ENCODE measurements at regions of chr22 and their contacts with region 1.

Region 1: GRCh38 chr22:31749636-31750364 is at the start of gene PRR14L:
- DNase-seq: peak; percentile 100
- ATAC-seq: peak; percentile 71
- H3K4me3 Mint-ChIP-seq: peak within 1 kb of the TSS; percentile 89
- H3K27ac Mint-ChIP-seq: peak within 1 kb of the TSS; percentile 93
- H3K4me1 Mint-ChIP-seq: peaks cover 43% of the 10 kb centered on the region
- H3K27me3 Mint-ChIP-seq: no peaks in the 10 kb centered on the region
- total RNA-seq, gene PRR14L: 48.2 to 52.2 TPM

Region 2: DNA sequence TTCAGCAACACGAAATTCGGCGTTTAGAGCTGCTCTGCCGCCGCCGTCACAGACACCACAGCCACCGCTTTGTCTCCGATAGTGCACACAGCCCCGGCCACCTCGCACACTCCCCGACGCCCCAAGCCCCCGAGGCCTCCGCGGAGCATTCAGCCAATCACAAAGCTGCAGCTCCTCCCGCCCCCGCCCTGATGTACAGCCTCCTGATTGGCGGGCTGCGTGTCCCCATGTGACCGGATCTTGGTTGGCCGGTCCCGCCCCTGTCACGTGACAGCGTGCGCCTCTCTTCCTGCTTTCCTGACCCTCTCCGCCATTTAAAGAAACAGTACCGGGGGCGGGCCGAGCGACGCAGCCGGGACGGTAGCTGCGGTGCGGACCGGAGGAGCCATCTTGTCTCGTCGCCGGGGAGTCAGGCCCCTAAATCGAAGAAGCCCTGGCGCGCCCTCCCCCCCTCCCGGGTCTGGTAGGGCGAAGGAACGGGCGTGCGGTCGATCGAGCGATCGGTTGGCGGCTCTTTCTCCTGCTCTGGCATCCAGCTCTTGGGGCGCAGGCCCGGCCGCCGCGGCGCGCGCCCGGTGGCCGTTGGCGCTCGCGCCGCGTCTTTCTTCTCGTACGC is 780.8 kb before region 1 on chr22 and contains the start of gene TUG1:
- CTCF ChIA-PET with region 1: no interaction called
- POLR2A ChIA-PET with region 1: no interaction called
- intact Hi-C with region 1: loop called in 1 of 2 experiments (anchors 1 kb)
- DNase-seq: peak; percentile 99
- ATAC-seq: peak; percentile 93
- H3K4me3 Mint-ChIP-seq: peak within 1 kb of the TSS; percentile 90
- H3K27ac Mint-ChIP-seq: peak within 1 kb of the TSS; percentile 95
- H3K4me1 Mint-ChIP-seq: peaks cover 51% of the 10 kb centered on the region
- H3K27me3 Mint-ChIP-seq: no peaks in the 10 kb centered on the region
- total RNA-seq, gene TUG1: 46.8 to 56.4 TPM

Region 3: DNA sequence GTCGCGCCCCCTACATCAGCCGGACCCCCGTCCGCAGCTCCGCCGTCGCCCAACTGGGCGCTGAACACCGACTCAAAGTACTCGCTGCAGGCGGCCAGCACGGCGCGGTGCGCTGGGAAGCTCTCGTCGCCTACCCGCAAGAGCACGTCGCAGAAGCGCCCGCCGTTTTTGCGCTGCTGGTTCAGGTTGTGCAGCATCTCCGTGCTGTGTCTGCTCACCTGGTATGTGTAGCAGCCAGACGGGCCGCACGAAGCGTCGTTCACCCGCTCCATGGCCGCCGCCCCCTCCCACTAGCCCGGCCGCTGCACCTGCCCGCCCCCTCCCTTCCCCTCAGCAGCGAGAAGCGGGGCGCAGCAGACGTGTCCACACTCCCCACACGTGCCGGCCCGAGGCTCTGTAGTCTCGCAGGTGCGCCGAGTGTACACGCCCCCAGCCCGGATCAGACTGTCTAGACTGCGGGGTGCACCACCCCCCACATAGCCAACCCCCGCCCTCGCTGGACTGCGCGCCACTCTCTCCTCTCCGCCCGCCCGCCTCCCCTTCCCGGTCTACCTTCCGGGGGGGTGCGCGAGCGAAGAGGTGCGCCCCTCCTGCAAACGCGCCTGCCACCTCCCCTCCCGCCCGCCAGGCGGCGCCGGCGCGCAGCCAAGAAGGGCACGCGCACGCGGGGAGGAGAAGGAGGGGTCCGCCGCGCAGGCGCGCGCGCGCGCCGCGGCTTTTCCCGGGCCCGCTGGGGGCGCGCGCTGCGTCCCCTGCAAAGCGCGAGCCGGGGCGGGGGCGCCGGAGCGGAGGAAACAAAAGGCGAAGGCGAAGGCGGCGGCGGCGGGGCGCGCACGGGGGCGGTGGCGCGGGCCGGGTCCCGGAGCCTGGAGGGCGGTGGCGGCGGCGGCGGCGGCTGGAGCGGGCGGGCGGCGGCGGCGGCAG is 404.2 kb before region 1 on chr22:
- CTCF ChIA-PET with region 1: no interaction called
- POLR2A ChIA-PET with region 1: no interaction called
- intact Hi-C with region 1: loop called (anchors 1 to 5 kb)
- DNase-seq: peak; percentile 93
- ATAC-seq: peak; percentile 59
- H3K4me3 Mint-ChIP-seq: peak overlapping the region; percentile 90
- H3K27ac Mint-ChIP-seq: peak overlapping the region; percentile 92
- H3K4me1 Mint-ChIP-seq: peaks cover 44% of the 10 kb centered on the region
- H3K27me3 Mint-ChIP-seq: no peaks in the 10 kb centered on the region

Region 4: GRCh38 chr22:31496007-31496734 is 253.6 kb before region 1 on chr22 and contains the start of gene SFI1:
- CTCF ChIA-PET with region 1: no interaction called
- POLR2A ChIA-PET with region 1: no interaction called
- intact Hi-C with region 1: loop called in 1 of 2 experiments (anchors 1 kb)
- DNase-seq: peak; percentile 97
- ATAC-seq: peak; percentile 87
- H3K4me3 Mint-ChIP-seq: peak within 1 kb of the TSS; percentile 85
- H3K27ac Mint-ChIP-seq: peak within 1 kb of the TSS; percentile 93
- H3K4me1 Mint-ChIP-seq: peaks cover 55% of the 10 kb centered on the region
- H3K27me3 Mint-ChIP-seq: no peaks in the 10 kb centered on the region
- total RNA-seq, gene SFI1: 221 to 234 TPM

Region 5: GRCh38 chr22:31676700-31677099 is 73.1 kb before region 1 on chr22:
- CTCF ChIA-PET with region 1: no interaction called
- POLR2A ChIA-PET with region 1: no interaction called
- intact Hi-C with region 1: loop called in 1 of 2 experiments (anchors 1 kb)
- DNase-seq: peak; percentile 95
- ATAC-seq: peak; percentile 100
- H3K4me3 Mint-ChIP-seq: peak overlapping the region; percentile 76
- H3K27ac Mint-ChIP-seq: peak overlapping the region; percentile 89
- H3K4me1 Mint-ChIP-seq: peaks cover 13% of the 10 kb centered on the region
- H3K27me3 Mint-ChIP-seq: no peaks in the 10 kb centered on the region

Region 6: GRCh38 chr22:31970490-31971444 is 221.0 kb after region 1 on chr22:
- CTCF ChIA-PET with region 1: interaction called, 5 read pairs
- POLR2A ChIA-PET with region 1: no interaction called
- intact Hi-C with region 1: loop called in 1 of 2 experiments (anchors 1 kb)
- DNase-seq: peak; percentile 93
- ATAC-seq: peak; percentile 95
- H3K4me3 Mint-ChIP-seq: peak overlapping the region; percentile 57
- H3K27ac Mint-ChIP-seq: peak overlapping the region; percentile 37
- H3K4me1 Mint-ChIP-seq: peaks cover 11% of the 10 kb centered on the region
- H3K27me3 Mint-ChIP-seq: no peaks in the 10 kb centered on the region

Region 7: GRCh38 chr22:32482708-32483107 is 732.9 kb after region 1 on chr22:
- CTCF ChIA-PET with region 1: no interaction called
- POLR2A ChIA-PET with region 1: no interaction called
- intact Hi-C with region 1: loop called in 1 of 2 experiments (anchors 2 kb)
- DNase-seq: peak; percentile 61
- ATAC-seq: peak; percentile 90
- H3K4me3 Mint-ChIP-seq: no peak overlapping the region
- H3K27ac Mint-ChIP-seq: no peak overlapping the region
- H3K4me1 Mint-ChIP-seq: peaks cover 25% of the 10 kb centered on the region
- H3K27me3 Mint-ChIP-seq: no peaks in the 10 kb centered on the region

Measured in activated CD4-positive, alpha-beta T cell treated with anti-CD3 and anti-CD28 coated beads for 36 hours (primary cell).